ENCODE measurements at regions of chr20 and their contacts with region 1.

Region 1: DNA sequence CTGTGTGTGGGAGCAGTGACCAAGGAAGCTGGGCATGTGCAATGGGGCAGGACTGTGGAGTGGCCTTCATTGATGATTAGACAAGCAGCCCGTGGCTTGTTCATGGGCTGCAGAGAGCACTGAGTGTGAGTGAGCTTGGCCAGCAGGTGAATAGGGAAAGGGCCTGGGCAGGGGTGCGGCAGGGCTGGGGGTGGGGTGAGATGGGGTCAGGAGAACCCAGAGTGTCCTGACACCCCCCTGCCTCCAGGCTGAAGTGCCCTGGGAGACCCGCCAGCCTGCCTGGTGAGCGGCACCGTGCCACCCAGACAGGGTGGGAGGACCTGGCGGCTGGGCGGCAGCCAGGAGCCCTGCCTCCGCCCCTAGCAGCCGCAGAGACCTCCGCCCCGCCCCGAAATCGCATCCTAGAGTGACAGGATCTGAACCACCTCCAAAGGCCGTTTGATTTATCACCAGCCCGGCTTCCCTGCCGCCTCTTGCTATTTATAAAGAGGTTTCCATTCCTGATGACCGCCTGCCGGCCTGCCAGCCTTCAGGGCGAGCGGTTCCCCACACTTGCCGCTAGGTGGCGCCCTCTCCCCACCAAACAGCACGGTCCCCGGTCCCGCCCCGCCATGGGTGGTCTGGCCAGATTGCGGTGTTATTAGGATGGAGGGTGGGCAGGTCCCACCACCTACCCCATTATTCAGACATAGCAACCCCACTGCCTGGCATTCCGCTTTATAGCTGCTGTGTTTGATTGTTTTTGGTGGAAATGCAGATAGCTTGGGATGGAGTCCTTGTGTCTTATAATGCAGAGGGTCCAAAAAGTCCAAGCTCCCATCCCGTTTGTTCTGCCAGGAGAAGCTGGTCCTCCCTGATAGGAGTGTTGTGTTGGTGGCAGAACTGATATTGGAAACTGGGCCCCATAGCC is 3.5 kb downstream of the MYLK2 start:
- DNase-seq: peak; percentile 62
- H3K4me3 ChIP-seq: no peak overlapping the region
- H3K27ac ChIP-seq: peak overlapping the region; percentile 26
- H3K4me1 ChIP-seq: peaks cover 22% of the 10 kb centered on the region
- H3K27me3 ChIP-seq: no peaks in the 10 kb centered on the region
- CTCF ChIP-seq: peak; percentile 96 to 97
- POLR2A ChIP-seq: no peak

Region 2: GRCh38 chr20:31835977-31836852 is 13.5 kb after region 1 on chr20:
- CTCF ChIA-PET with region 1: interaction called, 619 read pairs
- POLR2A ChIA-PET with region 1: no interaction called
- dilution Hi-C with region 1: no loop called
- intact Hi-C with region 1: loop called (anchors 1 kb)
- DNase-seq: peak; percentile 88
- H3K4me3 ChIP-seq: no peak overlapping the region
- H3K27ac ChIP-seq: peak overlapping the region; percentile 8
- H3K4me1 ChIP-seq: peaks cover 38% of the 10 kb centered on the region
- H3K27me3 ChIP-seq: no peaks in the 10 kb centered on the region
- CTCF ChIP-seq: no peak
- POLR2A ChIP-seq: no peak

Region 3: GRCh38 chr20:31842471-31843157 is 19.9 kb after region 1 on chr20:
- CTCF ChIA-PET with region 1: interaction called, 619 read pairs
- POLR2A ChIA-PET with region 1: no interaction called
- dilution Hi-C with region 1: no loop called
- intact Hi-C with region 1: loop called (anchors 1 kb)
- DNase-seq: peak; percentile 44
- H3K4me3 ChIP-seq: no peak overlapping the region
- H3K27ac ChIP-seq: peak overlapping the region; percentile 64
- H3K4me1 ChIP-seq: peaks cover 34% of the 10 kb centered on the region
- H3K27me3 ChIP-seq: no peaks in the 10 kb centered on the region
- CTCF ChIP-seq: no peak
- POLR2A ChIP-seq: no peak

Region 4: DNA sequence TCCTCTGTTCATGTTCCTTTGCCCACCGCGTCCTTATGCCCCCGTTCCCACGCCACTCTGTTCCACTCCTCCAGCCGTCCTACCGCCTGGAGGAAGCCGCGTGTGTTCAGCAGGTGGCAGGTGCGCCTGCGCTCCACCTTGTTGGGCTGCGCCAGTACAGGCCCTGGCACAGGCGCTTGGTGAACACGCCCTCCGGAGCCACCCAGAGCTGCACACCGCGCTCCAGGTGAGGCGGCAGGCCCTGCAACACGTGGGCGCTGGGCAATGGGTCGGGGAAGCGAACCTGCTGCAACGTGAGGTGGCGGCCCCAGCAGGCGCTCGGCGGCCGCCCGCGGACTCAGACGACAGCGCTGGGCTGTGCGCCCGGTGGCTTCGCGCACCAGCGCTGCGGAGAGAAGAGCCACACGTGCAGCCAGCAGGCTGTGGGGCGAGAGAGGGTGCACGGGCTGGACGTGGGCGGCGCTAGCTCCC is 26.8 kb after region 1 on chr20:
- CTCF ChIA-PET with region 1: interaction called, 619 read pairs
- POLR2A ChIA-PET with region 1: no interaction called
- dilution Hi-C with region 1: no loop called
- intact Hi-C with region 1: loop called (anchors 1 kb)
- DNase-seq: no peak
- H3K4me3 ChIP-seq: no peak overlapping the region
- H3K27ac ChIP-seq: no peak overlapping the region
- H3K4me1 ChIP-seq: no peaks in the 10 kb centered on the region
- H3K27me3 ChIP-seq: peaks cover 18 to 19% of the 10 kb centered on the region in 2 experiments
- CTCF ChIP-seq: no peak
- POLR2A ChIP-seq: no peak

Region 5: DNA sequence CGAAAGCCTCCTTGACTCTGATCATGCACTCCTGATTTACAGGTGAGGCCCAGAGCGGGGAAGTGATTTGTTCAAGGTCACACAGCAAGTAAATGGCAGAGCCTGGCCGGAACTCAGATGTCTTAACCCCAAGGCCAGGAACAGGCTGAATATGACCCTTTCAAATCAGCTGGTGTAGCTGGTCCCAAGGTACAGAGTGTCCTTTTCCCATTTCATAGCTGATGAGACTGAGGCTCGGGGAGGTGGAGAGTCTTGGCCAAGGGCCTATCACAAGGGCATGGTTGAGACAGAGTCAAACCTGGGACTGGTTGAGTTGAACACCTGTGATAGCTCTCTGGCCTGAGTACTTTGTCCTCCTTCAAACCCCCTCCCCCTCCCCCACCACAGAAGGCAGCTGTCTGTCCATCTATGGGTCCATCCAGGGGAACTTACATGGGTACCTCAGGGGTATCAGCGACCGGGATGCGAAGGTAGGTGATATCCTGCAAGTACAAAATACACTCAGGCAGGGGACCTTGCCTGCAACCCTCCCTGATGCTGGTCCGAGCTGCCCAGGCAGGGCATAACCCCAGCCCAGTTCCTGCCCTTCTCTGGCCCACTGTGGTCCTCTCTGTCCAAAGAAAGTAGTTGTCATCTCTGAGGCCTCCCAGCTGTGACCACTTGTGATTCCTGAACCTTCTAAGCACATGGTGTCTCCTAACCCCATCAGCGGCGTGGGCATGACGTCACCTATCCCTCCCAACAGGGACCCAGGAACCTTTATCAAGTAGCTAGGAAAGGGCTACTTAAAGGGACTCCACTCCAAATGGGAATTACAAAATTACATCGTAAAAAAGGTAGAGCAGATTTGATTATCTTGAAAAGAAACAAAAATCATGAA is 42.1 kb after region 1 on chr20:
- CTCF ChIA-PET with region 1: no interaction called
- POLR2A ChIA-PET with region 1: no interaction called
- dilution Hi-C with region 1: no loop called
- intact Hi-C with region 1: no loop called
- DNase-seq: no peak
- H3K4me3 ChIP-seq: no peak overlapping the region
- H3K27ac ChIP-seq: no peak overlapping the region
- H3K4me1 ChIP-seq: no peaks in the 10 kb centered on the region
- H3K27me3 ChIP-seq: peaks cover 15 to 20% of the 10 kb centered on the region in 2 experiments
- CTCF ChIP-seq: no peak
- POLR2A ChIP-seq: no peak

Region 6: DNA sequence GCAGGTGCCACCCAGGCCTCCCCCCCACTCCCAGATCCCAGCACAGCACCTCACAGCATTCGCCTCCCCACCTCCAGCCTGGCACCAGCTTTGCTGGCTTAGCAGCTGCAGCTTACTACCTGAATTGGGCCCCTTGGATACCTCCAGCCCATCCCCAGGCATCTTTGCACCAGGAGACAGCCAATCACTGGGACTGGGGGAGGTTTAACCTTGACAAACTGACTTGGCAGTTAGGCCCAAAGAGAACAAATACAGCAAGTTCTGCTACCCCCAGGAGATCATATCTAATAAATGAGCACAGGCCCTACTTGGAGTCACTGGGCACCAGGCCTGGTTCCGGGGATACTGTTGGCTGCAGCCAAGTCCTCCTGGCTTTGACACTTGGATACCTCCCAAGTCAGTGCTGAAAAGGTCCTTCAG is 120.4 kb after region 1 on chr20:
- CTCF ChIA-PET with region 1: no interaction called
- POLR2A ChIA-PET with region 1: no interaction called
- dilution Hi-C with region 1: no loop called
- intact Hi-C with region 1: no loop called
- DNase-seq: no peak
- H3K4me3 ChIP-seq: no peak overlapping the region
- H3K27ac ChIP-seq: no peak overlapping the region
- H3K4me1 ChIP-seq: no peaks in the 10 kb centered on the region
- H3K27me3 ChIP-seq: no peaks in the 10 kb centered on the region
- CTCF ChIP-seq: no peak
- POLR2A ChIP-seq: no peak

Measured in endothelial cell of umbilical vein (primary cell).